ENCODE measurements at regions of chr19 and their contacts with region 1.

Region 1: DNA sequence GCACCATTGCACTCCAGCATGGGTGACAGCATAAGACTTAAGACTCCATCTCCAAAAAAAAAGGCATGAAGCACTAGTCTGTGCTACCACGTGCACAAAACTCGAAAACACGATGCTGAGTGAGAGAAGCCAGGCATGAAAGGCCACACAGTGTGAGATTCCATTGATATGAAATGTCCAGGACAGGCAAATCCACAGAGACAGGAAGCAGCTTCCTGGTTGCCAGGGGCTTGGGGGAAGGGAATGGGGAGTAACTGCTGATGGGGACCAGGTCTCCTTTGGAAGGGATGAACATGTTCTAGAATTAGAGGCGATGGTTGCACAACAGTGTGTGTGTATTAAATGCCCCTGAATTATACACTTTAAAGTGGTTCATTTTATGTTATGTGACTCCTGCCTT is 15.9 kb upstream of the JUND start:
- DNase-seq: no peak
- H3K4me3 ChIP-seq: no peak overlapping the region
- H3K27ac ChIP-seq: no peak overlapping the region
- H3K4me1 ChIP-seq: peaks cover 0 to 3% of the 10 kb centered on the region in 2 donors
- H3K27me3 ChIP-seq: no peaks in the 10 kb centered on the region
- CTCF ChIP-seq: no peak
- POLR2A ChIP-seq: no peak

Region 2: DNA sequence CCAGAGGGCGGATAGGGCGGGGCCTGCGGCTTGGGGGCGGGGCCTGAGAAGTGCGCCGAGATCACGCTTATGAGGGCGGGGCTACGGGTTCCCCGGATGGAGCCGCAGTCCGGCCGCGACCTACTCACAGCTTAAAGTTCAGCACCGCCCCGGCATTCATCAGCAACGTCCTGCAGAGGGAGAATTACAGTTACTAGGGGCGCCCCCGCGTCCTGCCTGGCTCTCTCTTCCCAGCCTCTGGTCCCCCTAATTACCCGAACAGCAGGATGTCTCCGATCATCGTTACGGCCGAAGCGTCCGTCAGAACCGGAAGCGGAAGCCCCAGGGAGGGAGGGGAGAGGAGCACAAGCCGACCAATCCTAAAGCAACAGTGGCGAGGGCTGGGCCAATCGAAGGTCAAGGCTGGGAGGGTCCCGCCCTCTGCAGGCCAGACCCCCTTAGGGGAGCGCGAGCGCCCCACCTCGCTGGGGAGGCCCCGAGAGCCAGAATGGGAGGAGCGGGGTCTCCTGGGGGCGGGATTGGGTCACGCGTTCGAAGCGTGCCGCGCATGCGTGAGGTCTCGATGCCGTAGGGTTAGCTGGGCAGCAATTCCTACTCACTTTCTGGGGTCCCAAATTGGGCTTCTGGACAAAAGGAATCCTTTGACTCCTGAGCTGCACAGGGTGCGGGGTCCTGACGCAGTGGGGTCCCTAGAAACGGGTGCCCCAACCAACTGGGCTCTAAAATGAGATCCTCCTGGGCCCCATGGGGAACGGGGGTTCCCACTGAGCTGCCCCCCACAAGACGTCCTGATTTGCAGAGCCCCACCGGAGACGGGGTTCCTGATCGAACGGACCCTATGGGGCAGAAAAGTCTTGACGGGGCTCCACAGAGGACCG is 1637.2 kb before region 1 on chr19 and contains the start of gene SMIM7:
- intact Hi-C with region 1: loop called (anchors 5 kb)
- DNase-seq: peak; percentile 98
- H3K4me3 ChIP-seq: peak within 1 kb of the TSS; percentile 70 to 90 (median 73)
- H3K27ac ChIP-seq: peak within 1 kb of the TSS; percentile 84 to 95
- H3K4me1 ChIP-seq: peaks cover 0 to 9% of the 10 kb centered on the region in 2 donors
- H3K27me3 ChIP-seq: no peaks in the 10 kb centered on the region
- CTCF ChIP-seq: peak in 2 of 3 donors; percentile 15 to 20
- POLR2A ChIP-seq: peak; percentile 95
- total RNA-seq, gene SMIM7: 111 to 167 (median 142) TPM

Region 3: DNA sequence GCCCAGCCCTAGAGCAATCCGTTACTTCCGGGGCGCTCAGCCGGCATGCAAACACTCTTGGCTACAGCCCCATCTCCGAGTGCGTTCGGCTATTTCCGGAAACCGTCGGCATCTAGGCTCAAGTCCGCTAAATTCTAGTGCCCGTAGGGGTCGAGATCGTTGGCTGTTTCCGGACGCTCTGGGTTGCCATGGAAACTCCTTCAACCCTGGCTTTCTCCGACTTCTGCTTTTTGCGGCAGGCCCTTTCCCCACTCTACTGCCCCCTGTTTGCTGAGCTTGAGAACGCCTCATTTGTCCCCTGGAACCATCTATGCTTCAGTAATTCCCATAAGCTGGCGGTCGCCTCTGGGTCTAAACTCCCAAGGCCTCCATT is 144.9 kb before region 1 on chr19:
- intact Hi-C with region 1: no loop called
- DNase-seq: peak; percentile 91 to 95
- H3K4me3 ChIP-seq: peak overlapping the region; percentile 73 to 95 (median 90)
- H3K27ac ChIP-seq: peak overlapping the region; percentile 92 to 93
- H3K4me1 ChIP-seq: peaks cover 20 to 26% of the 10 kb centered on the region in 2 donors
- H3K27me3 ChIP-seq: no peaks in the 10 kb centered on the region
- CTCF ChIP-seq: peak; percentile 53 to 74 (median 60)
- POLR2A ChIP-seq: no peak